CD8-positive, alpha-beta T cell (primary cell): ENCODE measurements at regions of chr10 and their contacts with region 1.

Region 1: GRCh38 chr10:103102195-103102594 is 90.9 kb downstream of the NT5C2 start:
- DNase-seq: no peak
- ATAC-seq: no peak
- H3K4me3 ChIP-seq: no peak overlapping the region
- H3K4me3 Mint-ChIP-seq: no peak overlapping the region
- H3K27ac ChIP-seq: no peak overlapping the region
- H3K27ac Mint-ChIP-seq: no peak overlapping the region
- H3K4me1 ChIP-seq: no peaks in the 10 kb centered on the region
- H3K4me1 Mint-ChIP-seq: no peaks in the 10 kb centered on the region
- H3K27me3 ChIP-seq: no peaks in the 10 kb centered on the region
- H3K27me3 Mint-ChIP-seq: no peaks in the 10 kb centered on the region
- CTCF ChIP-seq: no peak

Region 2: GRCh38 chr10:102935505-102935904 is 166.7 kb before region 1 on chr10:
- CTCF ChIA-PET with region 1: no interaction called
- POLR2A ChIA-PET with region 1: no interaction called
- intact Hi-C with region 1: no loop called
- DNase-seq: no peak
- ATAC-seq: no peak
- H3K4me3 ChIP-seq: no peak overlapping the region
- H3K4me3 Mint-ChIP-seq: no peak overlapping the region
- H3K27ac ChIP-seq: no peak overlapping the region
- H3K27ac Mint-ChIP-seq: no peak overlapping the region
- H3K4me1 ChIP-seq: no peaks in the 10 kb centered on the region
- H3K4me1 Mint-ChIP-seq: peaks cover 16% of the 10 kb centered on the region
- H3K27me3 ChIP-seq: no peaks in the 10 kb centered on the region
- H3K27me3 Mint-ChIP-seq: no peaks in the 10 kb centered on the region
- CTCF ChIP-seq: no peak

Region 3: DNA sequence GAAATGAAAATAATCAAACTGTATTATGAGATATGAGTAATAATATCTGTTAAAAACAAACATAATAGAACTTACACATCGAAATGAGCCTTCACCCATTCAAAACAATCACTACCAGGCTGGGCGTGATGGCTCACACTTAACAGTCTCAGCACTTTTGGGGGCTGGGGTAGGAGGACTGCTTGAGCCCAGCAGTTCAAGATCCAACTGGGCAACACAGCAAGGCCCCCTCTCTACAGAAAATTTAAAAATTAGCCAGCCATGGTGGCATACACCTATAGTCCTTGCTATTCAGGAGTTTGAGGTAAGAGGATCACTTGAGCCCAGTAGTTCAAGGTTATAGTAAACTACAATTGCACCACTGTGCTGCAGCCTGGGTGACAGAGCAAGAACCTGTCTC is 15.1 kb after region 1 on chr10:
- CTCF ChIA-PET with region 1: no interaction called
- POLR2A ChIA-PET with region 1: no interaction called
- intact Hi-C with region 1: no loop called
- DNase-seq: no peak
- ATAC-seq: no peak
- H3K4me3 ChIP-seq: no peak overlapping the region
- H3K4me3 Mint-ChIP-seq: no peak overlapping the region
- H3K27ac ChIP-seq: no peak overlapping the region
- H3K27ac Mint-ChIP-seq: no peak overlapping the region
- H3K4me1 ChIP-seq: no peaks in the 10 kb centered on the region
- H3K4me1 Mint-ChIP-seq: peaks cover 10% of the 10 kb centered on the region
- H3K27me3 ChIP-seq: no peaks in the 10 kb centered on the region
- H3K27me3 Mint-ChIP-seq: no peaks in the 10 kb centered on the region
- CTCF ChIP-seq: no peak

Region 4: GRCh38 chr10:103333925-103334520 is 231.8 kb after region 1 on chr10:
- CTCF ChIA-PET with region 1: no interaction called
- POLR2A ChIA-PET with region 1: no interaction called
- intact Hi-C with region 1: loop called in 1 of 2 experiments (anchors 10 kb)
- DNase-seq: peak in 2 of 9 experiments; percentile 20 to 45
- ATAC-seq: no peak
- H3K4me3 ChIP-seq: no peak overlapping the region
- H3K4me3 Mint-ChIP-seq: no peak overlapping the region
- H3K27ac ChIP-seq: no peak overlapping the region
- H3K27ac Mint-ChIP-seq: no peak overlapping the region
- H3K4me1 ChIP-seq: no peaks in the 10 kb centered on the region
- H3K4me1 Mint-ChIP-seq: no peaks in the 10 kb centered on the region
- H3K27me3 ChIP-seq: no peaks in the 10 kb centered on the region
- H3K27me3 Mint-ChIP-seq: no peaks in the 10 kb centered on the region
- CTCF ChIP-seq: peak; percentile 80